ENCODE measurements at regions of chr15 and their contacts with region 1.

Region 1: DNA sequence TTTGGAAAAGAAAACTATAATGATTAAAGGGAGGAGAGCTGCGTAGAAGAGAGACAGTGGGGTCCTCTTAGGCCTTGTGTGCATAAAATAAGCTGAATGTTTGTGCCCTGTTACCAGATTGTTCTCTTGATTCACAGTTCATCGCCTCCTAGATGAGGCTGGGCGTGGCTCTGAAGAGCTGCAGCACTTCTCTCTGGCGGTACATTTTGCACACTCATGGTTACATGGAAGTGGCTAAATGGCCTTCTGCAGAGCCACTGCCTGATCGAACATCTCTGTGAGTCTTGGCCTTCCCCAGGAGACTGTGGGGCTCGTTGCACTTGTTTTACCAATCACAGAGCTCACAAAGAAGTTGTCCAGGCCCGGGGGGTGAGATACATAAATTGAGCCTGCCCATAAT is 208.8 kb downstream of the GABRG3 start:
- DNase-seq: no peak
- ATAC-seq: no peak
- H3K4me3 ChIP-seq: no peak overlapping the region
- H3K27ac ChIP-seq: no peak overlapping the region
- H3K4me1 ChIP-seq: no peaks in the 10 kb centered on the region
- H3K27me3 ChIP-seq: no peaks in the 10 kb centered on the region
- CTCF ChIP-seq: no peak
- POLR2A ChIP-seq: no peak

Region 2: DNA sequence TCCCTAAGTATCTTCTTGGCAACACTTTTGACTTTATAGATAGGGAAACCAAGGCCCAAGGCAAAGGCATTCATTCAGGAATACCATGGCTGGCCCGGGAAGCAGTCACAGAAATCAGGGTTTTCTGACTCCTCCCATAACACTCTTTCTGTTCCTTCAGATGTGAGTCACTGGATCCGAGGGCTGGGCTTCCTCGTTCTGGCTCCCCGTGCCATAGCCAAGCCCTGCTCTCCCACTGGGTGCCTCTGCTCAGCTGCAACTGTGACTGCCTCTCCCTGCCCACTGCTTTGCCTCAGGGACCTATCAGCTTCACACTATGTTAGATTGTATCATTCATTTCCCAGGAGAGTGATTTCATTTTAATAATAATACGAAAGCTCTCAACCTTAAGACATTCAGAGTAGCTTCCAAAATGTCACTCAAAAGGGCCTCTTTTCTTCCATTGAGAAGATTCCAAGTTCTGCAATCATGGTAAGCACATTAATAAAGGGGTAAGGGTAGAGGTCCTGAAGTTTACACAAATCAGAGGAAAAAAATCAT is 457.1 kb before region 1 on chr15:
- intact Hi-C with region 1: no loop called
- DNase-seq: no peak
- ATAC-seq: no peak
- H3K4me3 ChIP-seq: no peak overlapping the region
- H3K27ac ChIP-seq: no peak overlapping the region
- H3K4me1 ChIP-seq: peaks cover 5% of the 10 kb centered on the region
- H3K27me3 ChIP-seq: no peaks in the 10 kb centered on the region
- CTCF ChIP-seq: no peak
- POLR2A ChIP-seq: no peak

Region 3: GRCh38 chr15:27133249-27133648 is 46.5 kb before region 1 on chr15:
- intact Hi-C with region 1: loop called (anchors 5 kb)
- DNase-seq: no peak
- ATAC-seq: no peak
- H3K4me3 ChIP-seq: no peak overlapping the region
- H3K27ac ChIP-seq: no peak overlapping the region
- H3K4me1 ChIP-seq: no peaks in the 10 kb centered on the region
- H3K27me3 ChIP-seq: no peaks in the 10 kb centered on the region
- CTCF ChIP-seq: no peak
- POLR2A ChIP-seq: no peak

Region 4: GRCh38 chr15:27234593-27234992 is 54.8 kb after region 1 on chr15:
- intact Hi-C with region 1: no loop called
- DNase-seq: no peak
- ATAC-seq: no peak
- H3K4me3 ChIP-seq: no peak overlapping the region
- H3K27ac ChIP-seq: no peak overlapping the region
- H3K4me1 ChIP-seq: no peaks in the 10 kb centered on the region
- H3K27me3 ChIP-seq: no peaks in the 10 kb centered on the region
- CTCF ChIP-seq: no peak
- POLR2A ChIP-seq: no peak